Activated CD8-positive, alpha-beta T cell treated with anti-CD3 and anti-CD28 coated beads, Interleukin-2, amount 10 ng/mL, durations not matched to agents 7 days and 5 days (primary cell): ENCODE measurements at regions of chr1 and their contacts with region 1.

Region 1: GRCh38 chr1:25037174-25038074 is 107.3 kb upstream of the RUNX3 start:
- DNase-seq: peak; percentile 75
- ATAC-seq: peak; percentile 22
- H3K4me3 Mint-ChIP-seq: no peak overlapping the region
- H3K27ac Mint-ChIP-seq: peak overlapping the region; percentile 39
- H3K4me1 Mint-ChIP-seq: peaks cover 28% of the 10 kb centered on the region
- H3K27me3 Mint-ChIP-seq: peaks cover 3% of the 10 kb centered on the region

Region 2: GRCh38 chr1:24769656-24770651 is 267.5 kb before region 1 on chr1:
- CTCF ChIA-PET with region 1: no interaction called
- POLR2A ChIA-PET with region 1: no interaction called
- DNase-seq: no peak
- ATAC-seq: no peak
- H3K4me3 Mint-ChIP-seq: no peak overlapping the region
- H3K27ac Mint-ChIP-seq: no peak overlapping the region
- H3K4me1 Mint-ChIP-seq: peaks cover 11% of the 10 kb centered on the region
- H3K27me3 Mint-ChIP-seq: peaks cover 4% of the 10 kb centered on the region

Region 3: GRCh38 chr1:24909388-24909898 is 128.0 kb before region 1 on chr1:
- CTCF ChIA-PET with region 1: interaction called, 21 read pairs
- POLR2A ChIA-PET with region 1: interaction called, 3 read pairs
- DNase-seq: no peak
- ATAC-seq: no peak
- H3K4me3 Mint-ChIP-seq: peak overlapping the region; percentile 12
- H3K27ac Mint-ChIP-seq: peak overlapping the region; percentile 95
- H3K4me1 Mint-ChIP-seq: peaks cover 52% of the 10 kb centered on the region
- H3K27me3 Mint-ChIP-seq: no peaks in the 10 kb centered on the region

Region 4: DNA sequence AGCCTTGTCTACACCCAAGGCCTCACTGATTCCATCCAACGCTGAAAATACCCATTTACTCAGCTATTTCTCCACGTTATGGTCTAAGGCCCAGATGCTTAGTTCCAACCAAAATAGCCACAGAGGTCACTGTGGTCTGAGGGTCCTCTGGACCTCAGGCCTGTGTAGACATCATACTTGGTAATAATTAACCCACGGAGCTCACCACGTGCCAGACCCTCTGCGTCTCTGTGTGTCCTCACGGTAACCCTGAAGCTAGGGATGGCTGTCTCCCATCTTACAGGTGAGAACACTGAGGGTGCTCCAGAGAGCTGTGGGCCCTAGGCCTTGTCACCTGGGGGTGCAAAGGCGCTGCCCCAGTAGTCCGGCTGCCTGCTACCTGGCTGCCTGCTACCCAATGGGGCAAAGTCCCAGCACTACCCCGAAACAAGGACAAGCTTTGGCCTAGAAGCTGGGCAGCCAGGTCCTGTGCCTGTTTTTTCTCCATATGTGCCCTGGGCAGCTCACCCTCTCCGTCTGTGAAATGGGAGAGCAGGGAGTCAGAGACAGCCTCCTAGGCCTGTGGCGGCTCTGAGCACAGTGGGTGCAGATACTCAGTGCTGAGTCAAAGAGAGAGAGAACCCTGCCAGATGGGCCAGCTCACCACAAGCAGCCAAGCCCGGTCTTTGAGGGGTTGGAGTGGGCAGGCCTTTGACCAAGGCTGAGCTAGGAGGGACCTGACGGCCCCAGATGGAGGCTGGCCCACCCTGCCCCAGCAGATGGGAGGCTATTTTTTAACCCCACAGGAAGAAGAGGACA is 90.4 kb before region 1 on chr1:
- CTCF ChIA-PET with region 1: interaction called, 70 read pairs
- POLR2A ChIA-PET with region 1: no interaction called
- DNase-seq: no peak
- ATAC-seq: peak; percentile 40
- H3K4me3 Mint-ChIP-seq: peak overlapping the region; percentile 22
- H3K27ac Mint-ChIP-seq: peak overlapping the region; percentile 83
- H3K4me1 Mint-ChIP-seq: peaks cover 94% of the 10 kb centered on the region
- H3K27me3 Mint-ChIP-seq: no peaks in the 10 kb centered on the region

Region 5: GRCh38 chr1:24970399-24970753 is 67.0 kb before region 1 on chr1:
- CTCF ChIA-PET with region 1: interaction called, 225 read pairs
- POLR2A ChIA-PET with region 1: interaction called, 96 read pairs
- DNase-seq: no peak
- ATAC-seq: no peak
- H3K4me3 Mint-ChIP-seq: peak overlapping the region; percentile 66
- H3K27ac Mint-ChIP-seq: peak overlapping the region; percentile 90
- H3K4me1 Mint-ChIP-seq: peaks cover 87% of the 10 kb centered on the region
- H3K27me3 Mint-ChIP-seq: no peaks in the 10 kb centered on the region

Region 6: DNA sequence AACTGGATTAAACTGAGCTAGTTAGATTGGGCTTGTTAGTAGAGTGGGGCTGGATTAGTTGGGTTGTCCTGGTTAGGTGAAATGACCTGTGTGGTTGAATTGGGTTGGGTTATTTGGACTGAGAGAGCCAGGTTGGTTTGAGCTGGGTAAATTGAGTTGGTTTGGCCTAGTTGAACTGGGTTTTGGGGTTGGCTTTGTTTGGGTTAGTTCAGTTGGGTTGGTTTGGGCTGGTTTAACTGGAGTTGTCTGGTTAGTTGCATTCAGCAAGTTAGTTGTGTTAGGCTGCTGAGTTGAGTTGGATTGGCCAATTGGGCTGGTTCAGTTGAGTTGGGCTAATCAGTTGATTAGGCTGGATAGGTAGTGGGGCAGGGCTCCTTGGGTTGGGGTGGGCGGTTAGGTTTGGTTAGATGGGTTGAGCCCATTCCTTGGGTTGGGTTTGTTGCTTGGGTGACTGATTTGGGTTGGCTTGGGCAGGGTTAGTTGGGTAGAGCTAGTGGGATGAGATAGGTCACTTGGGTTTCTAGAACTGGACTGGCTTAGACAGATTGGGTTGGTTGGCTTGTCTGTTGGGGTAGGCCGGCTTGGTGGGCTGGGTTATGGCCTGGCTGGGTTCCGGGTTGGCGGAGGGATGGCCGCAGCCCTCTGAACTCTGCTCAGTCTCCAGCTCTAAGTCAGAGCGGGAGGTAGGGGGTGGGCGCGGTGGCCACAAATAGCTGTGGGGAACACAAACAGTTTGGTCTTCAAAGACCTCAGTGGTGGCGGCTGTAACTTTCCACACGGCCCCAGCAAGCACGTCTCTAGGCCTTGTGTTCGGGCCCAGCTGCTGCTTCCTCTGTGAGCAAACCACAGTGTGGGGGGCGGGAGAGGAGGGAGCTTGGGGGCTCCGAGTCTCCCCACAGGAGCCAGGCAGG is 40.2 kb before region 1 on chr1:
- CTCF ChIA-PET with region 1: interaction called, 136 read pairs
- POLR2A ChIA-PET with region 1: interaction called, 12 read pairs
- DNase-seq: peak; percentile 96
- ATAC-seq: peak; percentile 80
- H3K4me3 Mint-ChIP-seq: peak overlapping the region; percentile 66
- H3K27ac Mint-ChIP-seq: peak overlapping the region; percentile 96
- H3K4me1 Mint-ChIP-seq: peaks cover 92% of the 10 kb centered on the region
- H3K27me3 Mint-ChIP-seq: no peaks in the 10 kb centered on the region

Region 7: GRCh38 chr1:25099343-25099951 is 62.0 kb after region 1 on chr1:
- CTCF ChIA-PET with region 1: interaction called, 94 read pairs
- POLR2A ChIA-PET with region 1: interaction called, 6 read pairs
- DNase-seq: peak; percentile 79
- ATAC-seq: peak; percentile 62
- H3K4me3 Mint-ChIP-seq: peak overlapping the region; percentile 65
- H3K27ac Mint-ChIP-seq: peak overlapping the region; percentile 91
- H3K4me1 Mint-ChIP-seq: peaks cover 88% of the 10 kb centered on the region
- H3K27me3 Mint-ChIP-seq: peaks cover 8% of the 10 kb centered on the region